ENCODE measurements at regions of chr17 and their contacts with region 1.

Region 1: GRCh38 chr17:82810644-82811430 is 29.0 kb downstream of the ZNF750 start:
- DNase-seq: no peak
- H3K4me3 ChIP-seq: no peak overlapping the region
- H3K4me3 Mint-ChIP-seq: no peak overlapping the region
- H3K27ac ChIP-seq: no peak overlapping the region
- H3K27ac Mint-ChIP-seq: peak overlapping the region in 4 of 7 donors; percentile 24 to 55 (median 38)
- H3K4me1 ChIP-seq: no peaks in the 10 kb centered on the region
- H3K4me1 Mint-ChIP-seq: peaks cover 4% of the 10 kb centered on the region
- H3K27me3 ChIP-seq: no peaks in the 10 kb centered on the region
- H3K27me3 Mint-ChIP-seq: no peaks in the 10 kb centered on the region
- CTCF ChIP-seq: no peak

Region 2: DNA sequence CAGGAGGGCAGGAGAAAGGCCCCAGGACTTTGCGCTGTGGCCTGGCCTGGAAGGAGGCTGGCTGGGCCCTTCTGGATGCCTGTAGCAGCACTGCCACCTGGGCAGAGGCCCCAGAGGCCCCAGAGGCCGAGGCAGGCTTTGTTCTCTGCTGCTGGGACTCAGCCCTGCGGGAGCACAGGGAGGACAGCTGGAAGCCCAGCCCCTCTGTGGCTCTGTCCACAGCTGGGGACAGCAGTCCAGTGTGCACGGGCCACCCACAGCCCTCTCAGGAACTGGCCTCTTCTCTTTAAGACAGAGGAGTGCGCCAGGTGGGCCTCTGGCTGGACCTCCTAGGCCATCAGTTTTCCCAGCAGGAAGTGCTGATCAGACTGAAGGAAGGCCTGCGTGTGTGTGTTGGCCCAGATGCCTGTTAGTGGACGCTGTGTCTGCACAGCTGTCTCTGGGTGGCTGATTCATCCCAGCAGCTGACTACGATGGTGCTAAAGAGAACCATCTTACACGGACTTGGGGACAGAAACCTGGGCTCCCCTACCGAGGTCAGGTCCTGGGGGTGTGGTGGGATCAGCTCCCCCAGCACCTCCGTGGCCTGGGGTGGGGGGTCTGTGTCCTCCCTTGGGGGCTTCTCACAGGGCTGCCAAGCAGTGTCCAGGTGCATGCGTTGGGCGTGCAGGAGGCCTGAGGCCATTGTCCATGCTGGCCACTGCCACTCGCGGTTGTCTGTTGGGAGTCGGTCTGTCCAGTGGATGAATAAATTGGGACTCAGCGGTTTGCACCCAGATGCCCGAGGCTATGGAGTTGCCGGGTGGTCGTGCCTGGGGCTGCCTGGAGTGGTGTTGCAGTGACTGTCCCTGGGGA is 56.0 kb after region 1 on chr17:
- intact Hi-C with region 1: loop called in 1 of 2 experiments (anchors 5 kb)
- DNase-seq: no peak
- H3K4me3 ChIP-seq: no peak overlapping the region
- H3K4me3 Mint-ChIP-seq: no peak overlapping the region
- H3K27ac ChIP-seq: no peak overlapping the region
- H3K27ac Mint-ChIP-seq: peak overlapping the region in 1 of 7 donors; percentile 19
- H3K4me1 ChIP-seq: peaks cover 10 to 16% of the 10 kb centered on the region in 2 donors
- H3K4me1 Mint-ChIP-seq: peaks cover 14% of the 10 kb centered on the region
- H3K27me3 ChIP-seq: no peaks in the 10 kb centered on the region
- H3K27me3 Mint-ChIP-seq: peaks cover 0 to 1% (median 0%) of the 10 kb centered on the region in 3 donors
- CTCF ChIP-seq: no peak

Region 3: DNA sequence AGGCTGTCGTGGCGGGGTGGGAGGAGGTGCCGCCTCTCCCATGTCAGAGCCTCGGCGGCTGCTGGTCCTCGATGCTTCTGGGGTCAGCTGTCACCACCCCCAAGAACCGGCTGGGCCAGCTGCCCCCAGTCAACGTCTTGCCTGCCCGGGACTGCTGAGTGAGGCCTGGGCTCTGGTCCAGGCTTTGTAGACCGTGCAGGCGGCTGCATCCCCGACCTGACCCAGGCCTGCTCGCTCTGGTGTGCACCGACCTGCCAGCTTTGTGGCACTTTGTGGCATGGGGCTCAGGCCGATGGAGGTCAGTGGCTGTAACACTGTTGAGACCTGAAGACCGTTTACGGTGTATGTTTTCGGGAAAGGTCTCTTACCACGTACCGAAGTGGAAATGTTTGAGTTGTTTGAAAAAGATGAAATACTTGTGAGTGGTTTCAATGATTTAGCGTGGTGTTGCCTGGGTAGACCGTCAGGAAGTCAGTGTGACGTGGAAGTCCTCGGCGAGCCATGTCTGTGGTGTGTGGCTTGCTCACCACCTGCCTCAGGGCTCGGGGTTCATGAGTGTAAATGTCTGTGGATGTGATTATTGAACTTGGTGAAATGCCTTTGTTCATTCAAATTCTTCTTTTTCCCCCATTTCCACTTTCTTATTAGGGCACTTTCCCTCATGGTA is 82.2 kb after region 1 on chr17:
- intact Hi-C with region 1: no loop called
- DNase-seq: no peak
- H3K4me3 ChIP-seq: no peak overlapping the region
- H3K4me3 Mint-ChIP-seq: no peak overlapping the region
- H3K27ac ChIP-seq: no peak overlapping the region
- H3K27ac Mint-ChIP-seq: peak overlapping the region in 2 of 7 donors; percentile 87 to 91
- H3K4me1 ChIP-seq: peaks cover 0 to 4% of the 10 kb centered on the region in 2 donors
- H3K4me1 Mint-ChIP-seq: peaks cover 19% of the 10 kb centered on the region
- H3K27me3 ChIP-seq: no peaks in the 10 kb centered on the region
- H3K27me3 Mint-ChIP-seq: peaks cover 0 to 1% (median 0%) of the 10 kb centered on the region in 3 donors
- CTCF ChIP-seq: no peak

Measured in CD14-positive monocyte (primary cell).